Tibial artery (tissue), 4 donors: ENCODE measurements at regions of chr1 and their contacts with region 1.

Region 1: GRCh38 chr1:227808566-227808965 is 6.9 kb upstream of the PRSS38 start:
- DNase-seq: no peak
- H3K4me3 ChIP-seq: no peak overlapping the region
- H3K27ac ChIP-seq: no peak overlapping the region
- H3K4me1 ChIP-seq: no peaks in the 10 kb centered on the region
- H3K27me3 ChIP-seq: no peaks in the 10 kb centered on the region
- CTCF ChIP-seq: no peak

Region 2: DNA sequence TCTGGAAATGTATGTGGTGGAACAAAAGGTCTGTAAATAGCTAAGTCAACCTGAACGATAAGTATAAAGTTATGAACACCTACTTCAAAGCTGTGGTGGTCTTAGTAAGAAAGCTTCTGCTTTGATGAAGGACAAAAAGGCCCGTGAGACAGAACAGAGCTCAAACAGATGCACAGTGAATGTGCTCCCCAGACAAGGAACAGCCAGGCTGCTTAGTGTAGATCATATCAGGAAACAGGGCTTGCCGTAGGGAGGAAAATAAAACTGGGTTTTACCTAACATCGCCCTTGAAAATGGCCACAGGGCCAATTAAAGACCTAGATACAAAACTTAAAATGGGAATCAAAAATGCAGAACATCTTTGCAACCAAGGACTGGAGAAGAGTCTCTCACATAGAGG is 47.1 kb after region 1 on chr1:
- intact Hi-C with region 1: loop called (anchors 1 kb)
- DNase-seq: no peak
- H3K4me3 ChIP-seq: no peak overlapping the region
- H3K27ac ChIP-seq: no peak overlapping the region
- H3K4me1 ChIP-seq: no peaks in the 10 kb centered on the region
- H3K27me3 ChIP-seq: peaks cover 0 to 23% of the 10 kb centered on the region in 2 donors
- CTCF ChIP-seq: no peak

Region 3: GRCh38 chr1:227880342-227880924 is 71.9 kb after region 1 on chr1:
- intact Hi-C with region 1: no loop called
- DNase-seq: no peak
- H3K4me3 ChIP-seq: no peak overlapping the region
- H3K27ac ChIP-seq: no peak overlapping the region
- H3K4me1 ChIP-seq: peaks cover 0 to 3% (median under 1%) of the 10 kb centered on the region in 4 donors
- H3K27me3 ChIP-seq: peaks cover 0 to 19% of the 10 kb centered on the region in 2 donors
- CTCF ChIP-seq: no peak